Colonic mucosa (tissue), 4 donors: ENCODE measurements at regions of chr5 and their contacts with region 1.

Region 1: GRCh38 chr5:138282920-138283742 is 8.7 kb upstream of the GFRA3 start:
- DNase-seq: no peak
- H3K4me3 ChIP-seq: no peak overlapping the region
- H3K27ac ChIP-seq: no peak overlapping the region
- H3K4me1 ChIP-seq: no peaks in the 10 kb centered on the region
- H3K27me3 ChIP-seq: no peaks in the 10 kb centered on the region
- CTCF ChIP-seq: peak; percentile 29

Region 2: GRCh38 chr5:138223532-138223931 is 59.6 kb before region 1 on chr5:
- intact Hi-C with region 1: loop called (anchors 5 kb)
- DNase-seq: no peak
- H3K4me3 ChIP-seq: no peak overlapping the region
- H3K27ac ChIP-seq: no peak overlapping the region
- H3K4me1 ChIP-seq: no peaks in the 10 kb centered on the region
- H3K27me3 ChIP-seq: no peaks in the 10 kb centered on the region
- CTCF ChIP-seq: no peak

Region 3: GRCh38 chr5:138331449-138332368 is 48.6 kb after region 1 on chr5 and contains the start of gene CDC25C:
- intact Hi-C with region 1: no loop called
- DNase-seq: peak; percentile 98
- H3K4me3 ChIP-seq: peak within 1 kb of the TSS; percentile 45
- H3K27ac ChIP-seq: no peak within 1 kb of the TSS
- H3K4me1 ChIP-seq: no peaks in the 10 kb centered on the region
- H3K27me3 ChIP-seq: no peaks in the 10 kb centered on the region
- CTCF ChIP-seq: no peak
- total RNA-seq, gene CDC25C: 4.3 to 10.2 TPM

Region 4: GRCh38 chr5:138482638-138483037 is 199.5 kb after region 1 on chr5:
- intact Hi-C with region 1: no loop called
- DNase-seq: no peak
- H3K4me3 ChIP-seq: no peak overlapping the region
- H3K27ac ChIP-seq: no peak overlapping the region
- H3K4me1 ChIP-seq: no peaks in the 10 kb centered on the region
- H3K27me3 ChIP-seq: no peaks in the 10 kb centered on the region
- CTCF ChIP-seq: no peak